GM12878 (cell line): ENCODE measurements at regions of chr1 and their contacts with region 1.

Region 1: GRCh38 chr1:212035123-212035834 is at the starts of genes DTL and INTS7:
- DNase-seq: peak; percentile 96
- ATAC-seq: peak; percentile 77
- H3K4me3 ChIP-seq: peak within 1 kb of the TSS; percentile 90
- H3K27ac ChIP-seq: peak within 1 kb of the TSS; percentile 98
- H3K4me1 ChIP-seq: peaks cover 17% of the 10 kb centered on the region
- H3K27me3 ChIP-seq: no peaks in the 10 kb centered on the region
- CTCF ChIP-seq: peak; percentile 82 to 97 (median 83)
- EP300 ChIP-seq: no peak
- POLR2A ChIP-seq: peak; percentile 89
- RAD21 ChIP-seq: no peak
- polyA plus RNA-seq, gene DTL: 24.1 to 24.6 TPM
- polyA plus RNA-seq, gene INTS7: 17.1 to 20.1 TPM

Region 2: GRCh38 chr1:211578640-211579433 is 456.4 kb before region 1 on chr1 and contains the start of gene SLC30A1:
- CTCF ChIA-PET with region 1: interaction called, 6 read pairs
- POLR2A ChIA-PET with region 1: no interaction called
- RAD21 ChIA-PET with region 1: no interaction called
- SMC1A ChIA-PET with region 1: no interaction called
- in situ Hi-C with region 1: no loop called
- intact Hi-C with region 1: loop called (anchors 10 kb)
- DNase-seq: peak; percentile 83
- ATAC-seq: peak; percentile 87
- H3K4me3 ChIP-seq: peak within 1 kb of the TSS; percentile 96
- H3K27ac ChIP-seq: peak within 1 kb of the TSS; percentile 84
- H3K4me1 ChIP-seq: peaks cover 23% of the 10 kb centered on the region
- H3K27me3 ChIP-seq: no peaks in the 10 kb centered on the region
- CTCF ChIP-seq: no peak
- EP300 ChIP-seq: peak in 1 of 2 experiments; percentile 27; a peak in 1 of 4 replicates
- POLR2A ChIP-seq: peak; percentile 91
- RAD21 ChIP-seq: no peak
- polyA plus RNA-seq, gene SLC30A1: 3.5 to 4.0 TPM

Region 3: GRCh38 chr1:211935448-211935970 is 99.8 kb before region 1 on chr1:
- CTCF ChIA-PET with region 1: interaction called, 16 read pairs
- POLR2A ChIA-PET with region 1: interaction called, 3 read pairs
- RAD21 ChIA-PET with region 1: interaction called, 39 read pairs
- SMC1A ChIA-PET with region 1: interaction called, 13 read pairs
- in situ Hi-C with region 1: no loop called
- intact Hi-C with region 1: loop called (anchors 5 kb)
- DNase-seq: peak; percentile 97
- ATAC-seq: peak; percentile 84
- H3K4me3 ChIP-seq: peak overlapping the region; percentile 24; the same call in 1 of the 2 replicates
- H3K27ac ChIP-seq: peak overlapping the region; percentile 68
- H3K4me1 ChIP-seq: peaks cover 62% of the 10 kb centered on the region
- H3K27me3 ChIP-seq: no peaks in the 10 kb centered on the region
- CTCF ChIP-seq: no peak
- EP300 ChIP-seq: peak; percentile 87 to 94
- POLR2A ChIP-seq: no peak
- RAD21 ChIP-seq: 0 out of 2 replicates have a peak, but pooled peaks have one; percentile 4

Region 4: DNA sequence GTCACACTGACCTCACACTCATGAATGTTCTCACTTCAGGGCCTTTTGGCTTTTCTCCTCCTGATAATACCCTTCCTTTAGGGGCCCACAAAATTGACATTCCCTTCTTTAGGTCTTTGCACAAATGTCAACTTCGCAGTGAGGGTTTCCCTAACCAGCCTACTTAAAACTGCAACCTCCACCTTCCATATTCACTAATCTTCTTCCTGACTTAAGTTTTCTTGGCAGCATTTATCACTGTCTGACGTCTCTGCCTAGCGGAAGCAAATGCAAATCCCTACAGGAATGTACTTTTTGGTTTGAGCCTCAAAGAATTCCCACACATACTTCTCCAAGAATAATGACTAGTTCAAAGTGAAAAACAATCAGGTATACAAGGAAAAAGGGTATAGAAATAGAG is 32.7 kb before region 1 on chr1:
- CTCF ChIA-PET with region 1: interaction called, 28 read pairs
- POLR2A ChIA-PET with region 1: interaction called, 3 read pairs
- RAD21 ChIA-PET with region 1: no interaction called
- SMC1A ChIA-PET with region 1: interaction called, 12 read pairs
- in situ Hi-C with region 1: no loop called
- intact Hi-C with region 1: no loop called
- DNase-seq: no peak
- ATAC-seq: no peak
- H3K4me3 ChIP-seq: no peak overlapping the region
- H3K27ac ChIP-seq: no peak overlapping the region
- H3K4me1 ChIP-seq: no peaks in the 10 kb centered on the region
- H3K27me3 ChIP-seq: no peaks in the 10 kb centered on the region
- CTCF ChIP-seq: no peak
- EP300 ChIP-seq: no peak
- POLR2A ChIP-seq: no peak
- RAD21 ChIP-seq: no peak

Region 5: DNA sequence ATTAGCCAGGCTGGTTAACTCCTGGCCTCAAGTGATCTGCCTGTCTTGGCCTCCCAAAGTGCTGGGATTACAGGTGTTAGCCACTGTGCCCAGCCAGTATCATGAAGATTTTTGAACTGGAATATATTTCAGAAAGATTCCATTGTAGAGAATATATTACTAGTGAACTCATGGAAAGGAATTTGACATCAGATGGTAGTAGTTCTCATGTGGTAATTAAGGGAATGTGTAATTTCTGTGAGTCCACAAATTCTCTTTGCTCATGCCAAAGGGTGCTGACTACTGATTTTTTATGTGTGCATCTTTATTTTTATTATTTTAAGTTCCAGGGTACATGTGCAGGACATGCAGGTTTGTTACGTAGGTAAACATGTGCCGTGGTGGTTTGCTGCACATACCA is 10.7 kb after region 1 on chr1:
- CTCF ChIA-PET with region 1: interaction called, 19 read pairs
- POLR2A ChIA-PET with region 1: interaction called, 10 read pairs
- RAD21 ChIA-PET with region 1: interaction called, 10 read pairs
- SMC1A ChIA-PET with region 1: interaction called, 19 read pairs
- in situ Hi-C with region 1: no loop called
- intact Hi-C with region 1: no loop called
- DNase-seq: no peak
- ATAC-seq: no peak
- H3K4me3 ChIP-seq: no peak overlapping the region
- H3K27ac ChIP-seq: no peak overlapping the region
- H3K4me1 ChIP-seq: no peaks in the 10 kb centered on the region
- H3K27me3 ChIP-seq: no peaks in the 10 kb centered on the region
- CTCF ChIP-seq: no peak
- EP300 ChIP-seq: no peak
- POLR2A ChIP-seq: no peak
- RAD21 ChIP-seq: no peak

Region 6: DNA sequence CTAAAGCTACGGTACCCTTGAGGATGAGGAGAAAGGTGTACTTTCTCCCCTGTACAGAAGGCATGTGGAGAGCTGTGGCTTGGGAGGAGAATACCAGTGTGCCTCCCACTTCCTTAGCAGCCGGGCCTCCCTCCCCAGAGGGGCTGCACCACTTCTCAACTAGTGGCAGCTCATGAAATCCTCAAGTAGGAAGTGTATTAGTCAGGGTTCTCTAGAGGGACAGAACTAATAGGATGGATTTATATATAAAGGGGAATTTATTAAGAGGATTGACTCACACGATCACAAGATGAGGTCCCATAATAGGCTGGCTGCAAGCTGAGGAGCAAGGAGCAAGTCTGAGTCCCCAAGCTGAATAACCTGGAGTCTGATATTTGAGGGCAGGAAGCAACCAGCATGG is 196.8 kb after region 1 on chr1:
- CTCF ChIA-PET with region 1: no interaction called
- POLR2A ChIA-PET with region 1: no interaction called
- RAD21 ChIA-PET with region 1: no interaction called
- SMC1A ChIA-PET with region 1: no interaction called
- in situ Hi-C with region 1: no loop called
- intact Hi-C with region 1: no loop called
- DNase-seq: no peak
- ATAC-seq: no peak
- H3K4me3 ChIP-seq: no peak overlapping the region
- H3K27ac ChIP-seq: no peak overlapping the region
- H3K4me1 ChIP-seq: peaks cover 4% of the 10 kb centered on the region; the same call in 1 of the 2 replicates
- H3K27me3 ChIP-seq: no peaks in the 10 kb centered on the region
- CTCF ChIP-seq: no peak
- EP300 ChIP-seq: no peak
- POLR2A ChIP-seq: no peak
- RAD21 ChIP-seq: no peak

Region 7: DNA sequence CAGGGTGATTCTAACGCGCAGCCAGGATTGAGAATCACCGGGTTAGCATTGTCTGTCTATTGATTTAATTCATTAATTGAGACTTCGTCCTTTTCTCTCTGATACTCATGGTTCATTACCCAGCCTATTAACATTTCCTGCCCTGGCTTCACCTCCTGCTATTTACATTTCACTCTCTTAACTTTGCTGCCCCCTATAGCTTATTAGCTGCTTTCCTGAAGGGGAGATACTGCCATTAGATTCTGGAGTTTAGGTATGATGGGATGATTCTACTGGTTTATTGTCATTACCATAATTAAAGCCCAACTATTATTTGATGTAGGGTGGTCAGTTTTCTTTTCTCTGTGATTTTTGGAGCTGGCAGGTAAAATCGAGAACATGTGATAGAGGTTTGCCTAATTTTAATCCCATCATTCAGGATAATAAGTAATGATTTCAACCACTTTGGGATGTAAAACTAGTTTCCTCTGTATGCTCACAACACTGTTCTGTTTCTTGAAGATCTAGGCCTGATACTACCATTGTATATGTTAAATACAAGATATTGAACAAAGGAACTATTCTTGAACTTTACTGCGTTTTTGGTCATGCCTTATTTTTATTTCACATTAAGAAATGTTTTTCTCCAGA is 256.3 kb after region 1 on chr1:
- CTCF ChIA-PET with region 1: interaction called, 27 read pairs
- POLR2A ChIA-PET with region 1: interaction called, 9 read pairs
- RAD21 ChIA-PET with region 1: interaction called, 9 read pairs
- SMC1A ChIA-PET with region 1: interaction called, 31 read pairs
- in situ Hi-C with region 1: no loop called
- intact Hi-C with region 1: no loop called
- DNase-seq: no peak
- ATAC-seq: peak; percentile 87
- H3K4me3 ChIP-seq: peak overlapping the region; percentile 54; the same call in 1 of the 2 replicates
- H3K27ac ChIP-seq: no peak overlapping the region
- H3K4me1 ChIP-seq: peaks cover 18% of the 10 kb centered on the region
- H3K27me3 ChIP-seq: no peaks in the 10 kb centered on the region
- CTCF ChIP-seq: peak; percentile 63 to 87 (median 76); a peak in 5 of 6 replicates
- EP300 ChIP-seq: no peak
- POLR2A ChIP-seq: no peak
- RAD21 ChIP-seq: peak; percentile 93